ENCODE measurements at regions of chr11 and their contacts with region 1.

Region 1: DNA sequence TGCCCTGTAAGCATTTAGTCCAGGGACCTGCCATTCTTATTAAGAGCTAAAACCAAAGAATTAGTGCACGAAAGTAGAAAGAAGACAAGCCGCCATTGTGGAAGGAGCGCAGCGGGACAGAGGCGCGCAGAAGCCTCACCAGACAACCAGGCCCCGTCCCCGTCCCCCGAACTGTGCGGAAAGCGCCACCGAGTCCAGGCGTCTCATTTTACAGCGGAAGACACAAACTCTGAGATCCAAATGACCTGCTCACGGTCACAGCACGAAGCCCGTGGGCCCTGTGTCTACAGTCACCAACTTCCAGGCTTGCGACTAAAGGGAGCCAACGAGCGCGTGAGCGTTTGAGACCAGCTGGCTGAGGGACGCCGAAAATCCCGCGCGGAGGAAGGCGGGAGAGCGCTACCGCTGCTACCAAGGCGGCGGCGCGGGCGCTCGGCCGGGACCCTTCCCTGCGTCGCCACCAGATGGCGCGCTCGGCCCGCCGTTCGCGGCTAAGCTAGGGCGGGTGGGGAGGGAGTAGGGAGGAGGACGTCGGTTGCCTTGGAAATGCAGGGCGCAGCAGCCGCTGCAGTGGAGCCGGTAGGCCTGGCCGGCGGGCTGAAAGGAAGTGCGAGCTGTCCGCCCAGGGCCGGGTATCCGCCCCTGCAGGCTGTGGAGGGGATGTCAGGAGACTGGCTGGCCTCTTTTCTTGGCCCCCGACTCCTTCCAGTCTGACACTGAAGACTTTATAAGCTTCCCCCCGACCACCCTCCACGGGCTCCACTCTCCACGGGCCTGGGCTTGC is 434 bp upstream of the CCDC83 start:
- DNase-seq: peak; percentile 76 to 94 (median 87)
- ATAC-seq: peak; percentile 95 to 99 (median 96)
- H3K4me3 ChIP-seq: peak overlapping the region; percentile 58 to 83
- H3K4me3 Mint-ChIP-seq: peak overlapping the region; percentile 87 to 91 (median 90)
- H3K27ac ChIP-seq: peak overlapping the region; percentile 66
- H3K27ac Mint-ChIP-seq: peak overlapping the region; percentile 90 to 94
- H3K4me1 ChIP-seq: peaks cover 0 to 9% of the 10 kb centered on the region in 2 experiments
- H3K4me1 Mint-ChIP-seq: peaks cover 10 to 12% (median 11%) of the 10 kb centered on the region in 3 donors
- H3K27me3 ChIP-seq: peaks cover 0 to 7% of the 10 kb centered on the region in 2 experiments
- H3K27me3 Mint-ChIP-seq: no peaks in the 10 kb centered on the region

Region 2: DNA sequence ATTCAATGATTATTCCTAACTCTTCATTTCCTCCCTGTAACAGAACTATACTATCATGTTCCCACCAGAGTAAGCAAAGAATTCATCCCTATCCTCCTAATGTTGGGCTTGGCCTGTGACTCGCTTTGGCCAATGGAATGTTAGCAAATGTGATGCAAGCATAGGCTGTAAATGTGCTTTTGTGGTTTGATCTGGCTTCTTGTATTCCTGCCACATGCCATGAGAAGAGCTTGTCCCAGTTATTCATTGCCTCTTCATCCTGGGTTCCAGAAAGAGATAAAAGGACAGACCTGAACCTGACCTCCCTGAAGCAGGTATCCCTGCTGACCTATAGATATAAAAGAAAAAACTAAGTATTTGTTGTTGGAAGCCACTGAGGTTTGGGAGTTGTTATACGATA is 94.8 kb before region 1 on chr11:
- CTCF ChIA-PET with region 1: interaction called in 1 of 2 experiments, 11 read pairs
- POLR2A ChIA-PET with region 1: no interaction called
- DNase-seq: no peak
- ATAC-seq: no peak
- H3K4me3 ChIP-seq: no peak overlapping the region
- H3K4me3 Mint-ChIP-seq: no peak overlapping the region
- H3K27ac ChIP-seq: no peak overlapping the region
- H3K27ac Mint-ChIP-seq: peak overlapping the region; percentile 64 to 68
- H3K4me1 ChIP-seq: peaks cover 37 to 47% of the 10 kb centered on the region in 2 experiments
- H3K4me1 Mint-ChIP-seq: peaks cover 73 to 84% (median 74%) of the 10 kb centered on the region in 3 donors
- H3K27me3 ChIP-seq: no peaks in the 10 kb centered on the region
- H3K27me3 Mint-ChIP-seq: no peaks in the 10 kb centered on the region

Region 3: DNA sequence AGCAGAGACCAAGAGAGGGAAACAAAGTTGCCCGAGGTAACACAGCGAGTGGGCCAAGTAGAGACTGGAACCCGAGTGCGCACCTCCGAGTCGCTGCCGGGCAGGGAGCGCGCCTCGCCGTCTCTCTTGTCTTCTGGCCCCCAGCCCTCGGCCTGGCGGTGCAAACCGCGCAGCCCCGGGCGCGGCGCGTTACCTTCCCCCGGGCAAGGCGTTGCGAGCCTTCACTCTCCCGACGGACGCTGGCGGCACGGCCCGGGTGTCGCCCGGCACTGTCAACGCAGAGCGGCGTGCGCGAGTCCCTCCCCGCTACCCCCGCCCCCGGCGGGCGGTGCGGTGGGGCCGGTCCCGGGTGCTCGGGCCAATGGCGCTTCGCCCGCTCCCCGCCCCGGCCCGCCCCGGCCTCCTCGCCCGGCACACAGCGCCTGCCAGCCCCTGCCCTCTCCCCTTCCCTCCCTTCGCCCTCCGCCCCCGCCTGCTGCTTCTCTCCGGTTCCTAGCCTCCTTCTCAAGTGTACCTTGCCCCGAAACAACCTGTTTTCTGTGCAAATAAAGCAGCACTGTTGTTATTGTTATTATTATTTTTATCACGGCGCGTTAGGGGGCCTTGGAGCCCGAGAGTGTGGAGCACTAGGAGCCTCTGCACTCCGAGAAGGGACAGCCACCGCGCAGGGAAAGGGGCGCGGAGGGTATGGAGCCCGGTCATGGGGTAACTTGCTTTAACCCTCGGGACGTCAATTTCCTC is 43.7 kb before region 1 on chr11 and contains the start of gene SYTL2:
- CTCF ChIA-PET with region 1: interaction called, 8 to 15 read pairs
- POLR2A ChIA-PET with region 1: interaction called in 1 of 2 experiments, 3 read pairs
- DNase-seq: peak; percentile 58 to 84 (median 73)
- ATAC-seq: peak; percentile 88 to 94 (median 92)
- H3K4me3 ChIP-seq: peak within 1 kb of the TSS; percentile 86 to 87
- H3K4me3 Mint-ChIP-seq: peak within 1 kb of the TSS; percentile 89 to 92 (median 91)
- H3K27ac ChIP-seq: peak within 1 kb of the TSS; percentile 62
- H3K27ac Mint-ChIP-seq: peak within 1 kb of the TSS; percentile 83 to 91
- H3K4me1 ChIP-seq: peaks cover 14 to 31% of the 10 kb centered on the region in 2 experiments
- H3K4me1 Mint-ChIP-seq: peaks cover 32 to 51% (median 50%) of the 10 kb centered on the region in 3 donors
- H3K27me3 ChIP-seq: peaks cover 0 to 11% of the 10 kb centered on the region in 2 experiments
- H3K27me3 Mint-ChIP-seq: no peaks in the 10 kb centered on the region
- total RNA-seq, gene SYTL2: 19.8 to 85.4 (median 31.3) TPM

Region 4: DNA sequence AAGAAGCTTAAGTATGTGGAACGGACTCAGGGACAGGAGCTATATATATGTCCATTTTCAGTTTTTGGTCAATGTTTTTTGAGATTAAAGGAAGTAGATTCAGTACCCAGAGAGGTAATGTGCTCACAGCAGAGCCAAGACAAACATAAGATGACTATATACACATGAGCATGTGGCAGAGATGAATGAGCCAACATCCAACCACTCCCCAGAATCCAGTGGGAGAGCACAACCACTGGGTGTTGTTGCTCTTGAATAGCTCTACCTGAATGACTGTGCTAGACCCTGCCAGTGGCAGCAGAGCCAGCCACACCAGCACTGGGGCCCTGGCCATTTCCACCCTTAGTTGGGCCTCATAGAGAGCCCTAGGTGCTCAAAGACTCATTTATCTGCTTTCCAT is 33.1 kb before region 1 on chr11:
- CTCF ChIA-PET with region 1: interaction called, 5 to 15 read pairs
- POLR2A ChIA-PET with region 1: interaction called in 1 of 2 experiments, 4 read pairs
- DNase-seq: no peak
- ATAC-seq: no peak
- H3K4me3 ChIP-seq: no peak overlapping the region
- H3K4me3 Mint-ChIP-seq: no peak overlapping the region
- H3K27ac ChIP-seq: no peak overlapping the region
- H3K27ac Mint-ChIP-seq: peak overlapping the region in 1 of 2 donors; percentile 71
- H3K4me1 ChIP-seq: peaks cover 36 to 42% of the 10 kb centered on the region in 2 experiments
- H3K4me1 Mint-ChIP-seq: peaks cover 53 to 58% (median 54%) of the 10 kb centered on the region in 3 donors
- H3K27me3 ChIP-seq: no peaks in the 10 kb centered on the region
- H3K27me3 Mint-ChIP-seq: no peaks in the 10 kb centered on the region

Region 5: DNA sequence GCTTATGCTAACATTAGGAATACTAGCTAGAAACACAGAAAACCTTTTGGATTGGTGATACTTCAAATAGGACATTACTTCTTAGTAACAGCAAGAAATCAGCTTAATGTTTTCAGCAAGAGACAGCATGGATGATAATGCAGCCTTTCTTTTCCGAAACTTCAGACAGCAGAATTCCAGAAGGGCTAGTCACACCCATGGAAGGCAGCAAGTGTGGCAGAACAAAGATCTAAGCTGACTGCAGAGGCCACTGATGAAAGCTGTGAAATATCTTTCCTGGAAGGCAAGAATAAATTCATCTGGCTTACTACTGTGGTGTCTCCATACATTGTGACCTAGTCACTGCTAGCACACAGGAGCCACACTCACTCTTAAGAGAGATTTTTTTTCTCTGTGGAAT is 100.8 kb after region 1 on chr11:
- CTCF ChIA-PET with region 1: no interaction called
- POLR2A ChIA-PET with region 1: no interaction called
- DNase-seq: no peak
- ATAC-seq: no peak
- H3K4me3 ChIP-seq: no peak overlapping the region
- H3K4me3 Mint-ChIP-seq: no peak overlapping the region
- H3K27ac ChIP-seq: no peak overlapping the region
- H3K27ac Mint-ChIP-seq: no peak overlapping the region
- H3K4me1 ChIP-seq: no peaks in the 10 kb centered on the region
- H3K4me1 Mint-ChIP-seq: no peaks in the 10 kb centered on the region
- H3K27me3 ChIP-seq: no peaks in the 10 kb centered on the region
- H3K27me3 Mint-ChIP-seq: no peaks in the 10 kb centered on the region

Region 6: DNA sequence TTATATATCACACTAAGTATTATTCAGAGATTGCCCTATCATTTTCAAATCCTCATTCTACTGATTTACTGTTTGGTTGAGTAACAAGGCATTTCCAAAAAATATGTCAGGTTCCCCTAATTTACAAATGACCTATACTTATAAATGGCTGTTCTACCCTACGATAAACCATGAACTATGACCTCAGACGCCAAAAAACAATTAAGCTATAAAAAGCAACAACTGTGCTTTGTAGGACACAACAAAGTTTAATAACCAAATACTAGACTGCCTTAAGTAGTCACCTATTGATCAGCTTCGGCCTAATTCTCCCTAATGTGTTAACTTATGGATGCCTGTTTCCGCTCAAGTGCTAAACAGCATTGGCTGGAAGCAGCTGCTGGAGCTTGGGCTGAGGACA is 160.9 kb after region 1 on chr11:
- CTCF ChIA-PET with region 1: interaction called, 3 to 10 read pairs
- POLR2A ChIA-PET with region 1: no interaction called
- DNase-seq: no peak
- ATAC-seq: no peak
- H3K4me3 ChIP-seq: no peak overlapping the region
- H3K4me3 Mint-ChIP-seq: no peak overlapping the region
- H3K27ac ChIP-seq: no peak overlapping the region
- H3K27ac Mint-ChIP-seq: peak overlapping the region in 1 of 2 donors; percentile 12
- H3K4me1 ChIP-seq: no peaks in the 10 kb centered on the region
- H3K4me1 Mint-ChIP-seq: peaks cover 17 to 27% (median 26%) of the 10 kb centered on the region in 3 donors
- H3K27me3 ChIP-seq: no peaks in the 10 kb centered on the region
- H3K27me3 Mint-ChIP-seq: no peaks in the 10 kb centered on the region

Region 7: GRCh38 chr11:86291466-86292262 is 436.9 kb after region 1 on chr11:
- CTCF ChIA-PET with region 1: interaction called, 3 to 13 read pairs
- POLR2A ChIA-PET with region 1: interaction called in 1 of 2 experiments, 6 read pairs
- DNase-seq: peak in 34 of 35 experiments; percentile 4 to 76 (median 47)
- ATAC-seq: peak; percentile 26 to 40 (median 34)
- H3K4me3 ChIP-seq: no peak overlapping the region
- H3K4me3 Mint-ChIP-seq: no peak overlapping the region
- H3K27ac ChIP-seq: no peak overlapping the region
- H3K27ac Mint-ChIP-seq: peak overlapping the region; percentile 36 to 44
- H3K4me1 ChIP-seq: peaks cover 0 to 15% of the 10 kb centered on the region in 2 experiments
- H3K4me1 Mint-ChIP-seq: peaks cover 15 to 48% (median 30%) of the 10 kb centered on the region in 3 donors
- H3K27me3 ChIP-seq: no peaks in the 10 kb centered on the region
- H3K27me3 Mint-ChIP-seq: no peaks in the 10 kb centered on the region

Measured in T-cell (primary cell).